ENCODE measurements at regions of chr5 and their contacts with region 1.

Region 1: GRCh38 chr5:77030097-77031071 is at the start of gene AGGF1:
- DNase-seq: peak; percentile 85 to 90
- H3K4me3 ChIP-seq: peak within 1 kb of the TSS; percentile 98
- H3K27ac ChIP-seq: peak within 1 kb of the TSS; percentile 74
- H3K4me1 ChIP-seq: peaks cover 15% of the 10 kb centered on the region
- H3K27me3 ChIP-seq: no peaks in the 10 kb centered on the region
- CTCF ChIP-seq: no peak
- total RNA-seq, gene AGGF1: 15.4 and 19.4 TPM in 2 replicates

Region 2: GRCh38 chr5:76831110-76831452 is 199.3 kb before region 1 on chr5:
- CTCF ChIA-PET with region 1: no interaction called
- POLR2A ChIA-PET with region 1: no interaction called
- intact Hi-C with region 1: no loop called
- DNase-seq: peak in 1 of 2 experiments; percentile 46
- H3K4me3 ChIP-seq: no peak overlapping the region
- H3K27ac ChIP-seq: no peak overlapping the region
- H3K4me1 ChIP-seq: peaks cover 18% of the 10 kb centered on the region
- H3K27me3 ChIP-seq: no peaks in the 10 kb centered on the region
- CTCF ChIP-seq: no peak

Region 3: DNA sequence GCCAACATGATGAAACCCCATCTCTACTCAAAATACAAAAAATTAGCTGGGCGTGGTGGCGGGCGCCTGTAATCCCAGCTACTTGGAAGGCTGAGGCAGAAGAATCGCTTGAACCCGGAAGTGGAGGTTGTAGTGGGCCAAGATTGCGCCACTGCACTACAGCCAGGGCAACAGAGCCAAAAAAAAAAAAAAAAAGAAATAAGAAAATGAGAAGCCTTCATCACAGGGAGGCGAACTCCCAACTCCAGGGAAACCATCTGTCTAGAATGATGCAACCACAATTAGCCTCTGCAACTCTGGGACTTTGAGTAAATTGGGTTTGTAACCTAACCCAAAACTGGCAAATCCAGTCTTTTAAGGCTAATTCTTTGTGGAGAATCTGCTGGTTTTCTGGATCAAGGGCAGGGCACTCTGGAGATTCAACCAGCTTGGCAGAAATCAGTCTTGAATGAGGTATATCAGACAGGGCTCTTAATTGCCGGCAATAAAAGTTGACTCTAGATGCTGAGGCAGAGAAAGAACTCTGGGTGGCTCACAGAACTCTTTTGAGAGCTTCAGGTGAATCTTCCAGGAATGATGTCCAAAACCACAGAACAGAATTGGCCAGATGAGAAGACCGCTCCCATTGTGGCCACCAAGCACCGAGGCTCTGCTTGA is 170.7 kb before region 1 on chr5:
- CTCF ChIA-PET with region 1: no interaction called
- POLR2A ChIA-PET with region 1: interaction called, 15 read pairs
- intact Hi-C with region 1: no loop called
- DNase-seq: no peak
- H3K4me3 ChIP-seq: no peak overlapping the region
- H3K27ac ChIP-seq: no peak overlapping the region
- H3K4me1 ChIP-seq: peaks cover 10% of the 10 kb centered on the region
- H3K27me3 ChIP-seq: no peaks in the 10 kb centered on the region
- CTCF ChIP-seq: no peak

Measured in PC-9 (cell line).